Activated CD4-positive, alpha-beta T cell treated with anti-CD3 and anti-CD28 coated beads, Interleukin-2, amount 10 ng/mL, durations not matched to agents 24 days and 14 days (primary cell): ENCODE measurements at regions of chr6 and their contacts with region 1.

Region 1: GRCh38 chr6:149028767-149029405 is 282.1 kb downstream of the UST start:
- DNase-seq: peak; percentile 93
- H3K4me3 Mint-ChIP-seq: peak overlapping the region; percentile 52
- H3K27ac Mint-ChIP-seq: peak overlapping the region; percentile 74
- H3K4me1 Mint-ChIP-seq: peaks cover 49% of the 10 kb centered on the region
- H3K27me3 Mint-ChIP-seq: no peaks in the 10 kb centered on the region

Region 2: DNA sequence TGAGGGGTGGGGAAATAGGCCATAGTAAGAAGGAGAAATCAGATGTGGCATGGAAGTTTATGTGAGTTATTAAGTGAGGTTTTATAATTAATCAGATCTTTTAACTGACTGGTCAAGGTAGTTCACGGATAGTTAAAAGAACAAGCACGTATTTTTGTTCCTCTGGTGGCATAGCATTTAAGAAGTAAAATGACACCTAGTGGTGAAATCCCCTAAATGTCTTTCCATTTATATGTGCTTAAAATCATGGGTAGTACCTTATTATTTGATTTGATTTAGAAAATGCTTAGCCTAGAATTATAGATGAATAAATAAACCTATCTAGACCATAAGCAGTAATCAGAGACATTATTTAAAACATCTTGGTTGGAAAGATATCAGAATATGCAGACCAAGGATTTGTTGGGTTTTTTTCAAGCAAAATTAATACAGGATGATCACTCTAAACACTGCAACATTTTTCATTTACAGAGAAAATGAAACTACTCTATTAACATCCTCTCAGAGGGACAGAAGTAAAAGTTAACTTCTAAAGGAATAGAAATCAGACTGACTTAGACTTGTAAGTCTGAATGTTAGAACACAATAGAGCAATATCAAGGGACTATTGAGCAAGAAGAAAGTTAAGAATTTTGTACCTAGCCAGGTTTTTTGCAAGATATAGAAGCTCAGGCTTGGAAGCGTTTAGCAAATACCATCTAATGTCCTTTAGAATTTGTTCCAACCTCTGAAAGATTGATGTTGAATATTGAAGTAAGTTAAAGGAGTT is 1743.6 kb before region 1 on chr6:
- intact Hi-C with region 1: loop called (anchors 5 kb)
- DNase-seq: no peak
- H3K4me3 Mint-ChIP-seq: no peak overlapping the region
- H3K27ac Mint-ChIP-seq: peak overlapping the region; percentile 60
- H3K4me1 Mint-ChIP-seq: peaks cover 39% of the 10 kb centered on the region
- H3K27me3 Mint-ChIP-seq: no peaks in the 10 kb centered on the region

Region 3: GRCh38 chr6:148999929-149000468 is 28.9 kb before region 1 on chr6:
- intact Hi-C with region 1: no loop called
- DNase-seq: peak; percentile 61
- H3K4me3 Mint-ChIP-seq: peak overlapping the region; percentile 11
- H3K27ac Mint-ChIP-seq: no peak overlapping the region
- H3K4me1 Mint-ChIP-seq: peaks cover 13% of the 10 kb centered on the region
- H3K27me3 Mint-ChIP-seq: peaks cover 10% of the 10 kb centered on the region

Region 4: GRCh38 chr6:149014631-149015534 is 14.0 kb before region 1 on chr6:
- intact Hi-C with region 1: no loop called
- DNase-seq: no peak
- H3K4me3 Mint-ChIP-seq: no peak overlapping the region
- H3K27ac Mint-ChIP-seq: no peak overlapping the region
- H3K4me1 Mint-ChIP-seq: no peaks in the 10 kb centered on the region
- H3K27me3 Mint-ChIP-seq: peaks cover 12% of the 10 kb centered on the region

Region 5: GRCh38 chr6:149075616-149076364 is 46.9 kb after region 1 on chr6:
- intact Hi-C with region 1: loop called (anchors 1 kb)
- DNase-seq: peak; percentile 68
- H3K4me3 Mint-ChIP-seq: peak overlapping the region; percentile 10
- H3K27ac Mint-ChIP-seq: peak overlapping the region; percentile 87
- H3K4me1 Mint-ChIP-seq: peaks cover 45% of the 10 kb centered on the region
- H3K27me3 Mint-ChIP-seq: no peaks in the 10 kb centered on the region

Region 6: GRCh38 chr6:149147938-149148718 is 119.2 kb after region 1 on chr6:
- intact Hi-C with region 1: loop called (anchors 1 kb)
- DNase-seq: peak; percentile 85
- H3K4me3 Mint-ChIP-seq: peak overlapping the region; percentile 70
- H3K27ac Mint-ChIP-seq: peak overlapping the region; percentile 94
- H3K4me1 Mint-ChIP-seq: peaks cover 80% of the 10 kb centered on the region
- H3K27me3 Mint-ChIP-seq: no peaks in the 10 kb centered on the region

Region 7: DNA sequence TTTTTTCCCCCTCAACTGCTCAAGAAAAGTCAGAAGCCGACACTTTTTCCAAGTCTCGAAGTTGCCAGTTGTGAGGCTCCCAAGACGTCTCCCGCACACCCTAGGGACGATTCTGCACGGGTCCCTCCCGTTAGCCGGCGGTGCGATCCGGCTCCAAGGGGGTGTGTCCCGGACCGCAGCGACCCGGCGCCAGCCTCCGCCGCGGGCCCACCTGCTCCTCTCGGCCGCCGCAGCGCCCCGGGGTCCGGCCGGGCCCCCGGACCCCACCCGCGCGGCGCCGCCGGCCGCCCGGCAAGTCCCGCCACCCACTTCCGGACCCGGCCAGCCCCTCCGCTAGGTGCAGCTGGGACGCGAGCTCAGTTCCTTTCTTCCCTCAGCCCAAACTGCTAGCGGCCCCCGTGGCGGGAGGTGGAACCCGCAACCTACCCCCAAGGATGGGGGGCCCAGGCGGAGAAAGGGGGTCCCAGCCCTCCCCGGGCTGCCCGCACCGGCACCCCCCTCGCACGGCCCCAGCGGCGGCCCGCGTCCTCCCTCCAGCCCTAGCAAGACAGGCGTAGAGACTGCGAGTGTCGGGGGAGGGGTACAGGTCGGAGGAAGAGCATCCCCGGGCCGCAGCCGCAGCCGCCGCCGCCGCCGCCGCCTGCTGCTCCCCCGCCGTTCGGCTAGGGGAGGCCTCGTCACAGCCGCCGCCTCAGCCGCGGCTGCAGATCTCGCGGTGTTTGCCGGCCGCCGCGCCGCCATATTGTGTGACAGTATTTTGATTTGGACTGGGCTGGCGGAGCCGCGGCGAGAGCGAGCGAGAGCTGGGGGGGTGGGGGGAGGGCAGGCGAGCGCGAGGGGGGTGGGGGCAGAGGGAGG is 288.1 kb after region 1 on chr6:
- intact Hi-C with region 1: loop called (anchors 1 kb)
- DNase-seq: peak; percentile 97
- H3K4me3 Mint-ChIP-seq: peak overlapping the region; percentile 91
- H3K27ac Mint-ChIP-seq: peak overlapping the region; percentile 92
- H3K4me1 Mint-ChIP-seq: peaks cover 35% of the 10 kb centered on the region
- H3K27me3 Mint-ChIP-seq: no peaks in the 10 kb centered on the region

Region 8: DNA sequence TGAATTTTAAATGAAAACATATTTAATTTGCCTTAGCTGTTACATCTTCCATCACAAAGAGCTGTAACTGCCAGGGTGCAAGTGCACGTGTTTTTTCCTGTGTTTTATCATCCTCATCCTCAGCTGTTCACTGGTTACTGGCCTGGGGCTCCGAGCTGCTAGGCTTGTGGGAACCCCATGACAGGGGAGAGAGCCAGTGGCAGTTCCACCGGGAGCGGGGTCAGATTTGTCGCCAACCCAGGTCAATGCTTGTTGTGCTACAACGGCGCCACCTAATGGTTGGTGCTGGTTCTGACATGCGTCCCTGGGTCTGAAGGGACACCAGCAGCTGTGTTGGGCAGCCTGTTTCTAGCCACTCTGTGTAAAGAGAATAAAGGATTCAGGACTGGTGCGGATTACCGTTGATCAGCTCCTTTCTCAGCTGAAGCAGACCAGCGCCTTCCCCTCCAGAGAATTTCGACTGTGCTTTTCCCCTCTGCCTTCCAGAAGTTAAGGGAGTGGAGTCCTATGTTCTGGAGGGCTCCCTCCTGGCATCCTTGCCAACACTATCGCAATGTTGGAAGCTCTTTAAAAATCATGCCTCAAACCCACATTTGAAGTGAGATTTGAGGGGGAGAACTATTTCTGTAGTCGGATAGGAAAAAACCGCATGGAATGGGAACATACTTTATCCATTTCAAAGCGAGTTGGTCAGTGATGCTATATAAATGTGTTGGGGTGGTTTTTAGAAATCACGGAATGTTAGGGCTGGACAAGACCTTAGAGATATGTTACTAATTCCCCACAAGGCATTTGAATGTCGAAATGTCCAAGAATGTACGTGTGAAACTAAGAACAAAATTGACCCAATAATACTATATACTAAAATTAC is 403.3 kb after region 1 on chr6:
- intact Hi-C with region 1: loop called (anchors 1 kb)
- DNase-seq: peak; percentile 97
- H3K4me3 Mint-ChIP-seq: peak overlapping the region; percentile 69
- H3K27ac Mint-ChIP-seq: peak overlapping the region; percentile 92
- H3K4me1 Mint-ChIP-seq: peaks cover 16% of the 10 kb centered on the region
- H3K27me3 Mint-ChIP-seq: no peaks in the 10 kb centered on the region

Region 9: DNA sequence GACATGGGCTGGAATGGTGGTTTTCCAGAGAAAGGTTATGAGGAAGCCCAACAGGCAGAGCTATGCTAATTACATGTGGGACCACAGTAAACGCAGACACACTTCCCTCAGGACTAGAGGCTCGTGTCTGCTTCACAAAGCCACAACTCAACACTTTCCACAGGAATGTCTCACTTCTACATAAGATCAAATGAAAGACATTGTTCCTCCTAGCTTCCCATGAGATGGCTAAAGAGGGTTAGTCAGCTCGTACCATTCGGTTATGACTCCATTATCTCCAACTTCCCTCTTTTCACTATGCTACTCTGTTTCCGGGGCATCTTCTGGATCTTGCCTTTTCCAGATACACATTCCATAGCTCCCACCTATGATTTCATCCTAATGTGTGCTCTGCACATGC is 485.0 kb after region 1 on chr6:
- intact Hi-C with region 1: loop called (anchors 1 kb)
- DNase-seq: peak; percentile 49
- H3K4me3 Mint-ChIP-seq: no peak overlapping the region
- H3K27ac Mint-ChIP-seq: peak overlapping the region; percentile 67
- H3K4me1 Mint-ChIP-seq: peaks cover 44% of the 10 kb centered on the region
- H3K27me3 Mint-ChIP-seq: no peaks in the 10 kb centered on the region

Region 10: GRCh38 chr6:149781715-149782114 is 752.8 kb after region 1 on chr6:
- intact Hi-C with region 1: no loop called
- DNase-seq: no peak
- H3K4me3 Mint-ChIP-seq: no peak overlapping the region
- H3K27ac Mint-ChIP-seq: no peak overlapping the region
- H3K4me1 Mint-ChIP-seq: no peaks in the 10 kb centered on the region
- H3K27me3 Mint-ChIP-seq: no peaks in the 10 kb centered on the region